CD8-positive, alpha-beta T cell (primary cell): ENCODE measurements at regions of chr9 and their contacts with region 1.

Region 1: GRCh38 chr9:98848450-98849149 is 41.1 kb downstream of the GALNT12 start:
- DNase-seq: peak; percentile 47 to 83 (median 76)
- ATAC-seq: peak; percentile 90
- H3K4me3 ChIP-seq: no peak overlapping the region
- H3K4me3 Mint-ChIP-seq: no peak overlapping the region
- H3K27ac ChIP-seq: no peak overlapping the region
- H3K27ac Mint-ChIP-seq: no peak overlapping the region
- H3K4me1 ChIP-seq: no peaks in the 10 kb centered on the region
- H3K4me1 Mint-ChIP-seq: peaks cover 3% of the 10 kb centered on the region
- H3K27me3 ChIP-seq: no peaks in the 10 kb centered on the region
- H3K27me3 Mint-ChIP-seq: no peaks in the 10 kb centered on the region
- CTCF ChIP-seq: peak; percentile 95

Region 2: GRCh38 chr9:98502360-98503325 is 346.0 kb before region 1 on chr9:
- CTCF ChIA-PET with region 1: no interaction called
- POLR2A ChIA-PET with region 1: no interaction called
- intact Hi-C with region 1: no loop called
- DNase-seq: no peak
- ATAC-seq: no peak
- H3K4me3 ChIP-seq: no peak overlapping the region
- H3K4me3 Mint-ChIP-seq: no peak overlapping the region
- H3K27ac ChIP-seq: no peak overlapping the region
- H3K27ac Mint-ChIP-seq: no peak overlapping the region
- H3K4me1 ChIP-seq: no peaks in the 10 kb centered on the region
- H3K4me1 Mint-ChIP-seq: no peaks in the 10 kb centered on the region
- H3K27me3 ChIP-seq: no peaks in the 10 kb centered on the region
- H3K27me3 Mint-ChIP-seq: peaks cover 15% of the 10 kb centered on the region
- CTCF ChIP-seq: no peak

Region 3: DNA sequence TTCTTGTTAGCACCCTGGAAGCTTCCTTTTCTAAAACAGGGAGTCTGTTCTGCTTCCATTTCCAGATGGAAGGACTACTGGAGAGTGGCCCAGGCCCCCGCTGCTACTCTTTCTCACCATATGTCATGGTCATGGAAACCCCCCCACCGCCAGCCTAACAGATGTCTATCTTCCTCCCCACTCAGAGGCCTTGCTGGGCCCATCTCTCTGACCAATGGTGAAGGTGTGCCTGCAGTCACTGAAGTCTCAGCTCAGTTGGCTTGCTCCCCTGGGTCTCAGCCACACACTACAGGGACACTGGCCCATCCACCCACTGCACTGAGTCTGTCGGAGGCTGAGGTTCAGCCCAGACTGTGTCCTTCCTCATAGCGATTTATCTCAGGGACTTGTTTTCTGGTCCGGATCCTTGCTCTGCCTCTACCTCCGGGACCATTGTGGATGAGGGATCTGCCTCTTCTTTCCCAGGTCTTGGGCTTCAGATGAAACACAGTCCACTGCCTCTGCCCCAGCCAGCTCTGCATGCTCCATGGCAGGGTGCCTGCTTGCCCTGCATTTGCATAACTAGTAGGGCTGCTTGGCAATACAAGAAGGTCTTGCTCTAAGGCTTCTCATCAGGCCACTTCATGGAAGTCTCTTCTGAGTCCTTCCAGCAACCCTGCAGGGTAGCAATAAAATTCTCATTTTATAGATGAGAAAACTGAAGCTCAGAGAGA is 10.3 kb before region 1 on chr9:
- CTCF ChIA-PET with region 1: interaction called, 18 read pairs
- POLR2A ChIA-PET with region 1: no interaction called
- intact Hi-C with region 1: no loop called
- DNase-seq: no peak
- ATAC-seq: no peak
- H3K4me3 ChIP-seq: no peak overlapping the region
- H3K4me3 Mint-ChIP-seq: no peak overlapping the region
- H3K27ac ChIP-seq: no peak overlapping the region
- H3K27ac Mint-ChIP-seq: no peak overlapping the region
- H3K4me1 ChIP-seq: no peaks in the 10 kb centered on the region
- H3K4me1 Mint-ChIP-seq: no peaks in the 10 kb centered on the region
- H3K27me3 ChIP-seq: no peaks in the 10 kb centered on the region
- H3K27me3 Mint-ChIP-seq: no peaks in the 10 kb centered on the region
- CTCF ChIP-seq: no peak

Region 4: GRCh38 chr9:98860871-98861293 is 12.3 kb after region 1 on chr9:
- CTCF ChIA-PET with region 1: interaction called, 14 read pairs
- POLR2A ChIA-PET with region 1: no interaction called
- intact Hi-C with region 1: no loop called
- DNase-seq: no peak
- ATAC-seq: no peak
- H3K4me3 ChIP-seq: no peak overlapping the region
- H3K4me3 Mint-ChIP-seq: no peak overlapping the region
- H3K27ac ChIP-seq: no peak overlapping the region
- H3K27ac Mint-ChIP-seq: no peak overlapping the region
- H3K4me1 ChIP-seq: no peaks in the 10 kb centered on the region
- H3K4me1 Mint-ChIP-seq: no peaks in the 10 kb centered on the region
- H3K27me3 ChIP-seq: no peaks in the 10 kb centered on the region
- H3K27me3 Mint-ChIP-seq: peaks cover 27% of the 10 kb centered on the region
- CTCF ChIP-seq: no peak

Region 5: GRCh38 chr9:98869866-98870265 is 21.3 kb after region 1 on chr9:
- CTCF ChIA-PET with region 1: interaction called, 16 read pairs
- POLR2A ChIA-PET with region 1: no interaction called
- intact Hi-C with region 1: no loop called
- DNase-seq: no peak
- ATAC-seq: no peak
- H3K4me3 ChIP-seq: no peak overlapping the region
- H3K4me3 Mint-ChIP-seq: no peak overlapping the region
- H3K27ac ChIP-seq: no peak overlapping the region
- H3K27ac Mint-ChIP-seq: no peak overlapping the region
- H3K4me1 ChIP-seq: no peaks in the 10 kb centered on the region
- H3K4me1 Mint-ChIP-seq: no peaks in the 10 kb centered on the region
- H3K27me3 ChIP-seq: no peaks in the 10 kb centered on the region
- H3K27me3 Mint-ChIP-seq: peaks cover 12% of the 10 kb centered on the region
- CTCF ChIP-seq: no peak

Region 6: GRCh38 chr9:99012942-99013512 is 164.4 kb after region 1 on chr9:
- CTCF ChIA-PET with region 1: interaction called, 16 read pairs
- POLR2A ChIA-PET with region 1: no interaction called
- intact Hi-C with region 1: loop called in 1 of 2 experiments (anchors 1 kb)
- DNase-seq: peak in 4 of 9 experiments; percentile 25 to 68 (median 52)
- ATAC-seq: peak; percentile 73
- H3K4me3 ChIP-seq: peak overlapping the region in 1 of 2 experiments; percentile 24
- H3K4me3 Mint-ChIP-seq: peak overlapping the region; percentile 74
- H3K27ac ChIP-seq: peak overlapping the region; percentile 35 to 81
- H3K27ac Mint-ChIP-seq: peak overlapping the region; percentile 95
- H3K4me1 ChIP-seq: peaks cover 20% of the 10 kb centered on the region
- H3K4me1 Mint-ChIP-seq: peaks cover 32% of the 10 kb centered on the region
- H3K27me3 ChIP-seq: no peaks in the 10 kb centered on the region
- H3K27me3 Mint-ChIP-seq: no peaks in the 10 kb centered on the region
- CTCF ChIP-seq: peak; percentile 42

Region 7: GRCh38 chr9:100322954-100323536 is 1474.4 kb after region 1 on chr9:
- CTCF ChIA-PET with region 1: no interaction called
- POLR2A ChIA-PET with region 1: no interaction called
- intact Hi-C with region 1: loop called in 1 of 2 experiments (anchors 10 kb)
- DNase-seq: peak in 4 of 9 experiments; percentile 11 to 48 (median 30)
- ATAC-seq: no peak
- H3K4me3 ChIP-seq: no peak overlapping the region
- H3K4me3 Mint-ChIP-seq: no peak overlapping the region
- H3K27ac ChIP-seq: no peak overlapping the region
- H3K27ac Mint-ChIP-seq: no peak overlapping the region
- H3K4me1 ChIP-seq: no peaks in the 10 kb centered on the region
- H3K4me1 Mint-ChIP-seq: peaks cover 14% of the 10 kb centered on the region
- H3K27me3 ChIP-seq: no peaks in the 10 kb centered on the region
- H3K27me3 Mint-ChIP-seq: no peaks in the 10 kb centered on the region
- CTCF ChIP-seq: peak; percentile 39